ENCODE measurements at regions of chr16 and their contacts with region 1.

Region 1: GRCh38 chr16:48164907-48165726 is 9.3 kb upstream of the ABCC12 start:
- DNase-seq: peak; percentile 61
- H3K4me3 ChIP-seq: peak overlapping the region in 1 of 3 experiments; percentile 16
- H3K27ac ChIP-seq: no peak overlapping the region
- H3K4me1 ChIP-seq: no peaks in the 10 kb centered on the region
- H3K27me3 ChIP-seq: no peaks in the 10 kb centered on the region
- CTCF ChIP-seq: peak; percentile 68 to 83

Region 2: DNA sequence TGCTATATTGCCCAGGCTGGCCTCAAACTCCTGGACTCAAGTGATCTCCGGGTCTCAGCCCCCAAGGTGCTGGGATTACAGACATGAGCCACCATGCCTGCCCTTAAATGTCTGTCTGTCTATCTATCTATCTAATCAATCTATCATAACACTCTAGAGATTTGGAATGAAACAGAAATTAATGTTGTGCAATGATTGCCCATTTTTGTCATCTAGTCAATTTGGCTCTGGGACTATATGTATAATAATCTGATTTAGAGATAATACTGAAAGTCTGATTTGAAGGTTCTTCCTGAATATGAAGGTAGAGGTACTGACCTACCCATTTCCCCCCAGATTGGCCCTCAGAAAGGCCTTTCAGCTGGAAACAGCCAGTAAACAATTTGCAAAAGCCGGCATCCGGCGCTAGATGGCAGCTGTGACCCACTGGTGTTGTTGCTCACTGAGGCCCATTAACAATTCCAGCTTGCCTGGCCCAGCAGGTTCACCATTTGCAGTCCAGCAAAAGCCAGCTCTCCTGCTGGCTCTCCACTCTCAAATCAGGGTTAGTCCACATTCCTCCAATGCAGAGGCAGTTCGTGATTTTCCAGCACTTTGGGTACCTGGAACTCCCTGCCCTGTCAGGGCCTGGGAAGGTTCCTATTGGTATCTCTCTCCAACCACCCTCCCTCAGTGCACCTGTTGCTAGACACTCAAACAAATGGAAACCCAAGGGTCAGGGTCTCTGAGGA is 1311.2 kb before region 1 on chr16:
- CTCF ChIA-PET with region 1: no interaction called
- dilution Hi-C with region 1: no loop called
- in situ Hi-C with region 1: no loop called
- intact Hi-C with region 1: loop called (anchors 1 kb)
- DNase-seq: peak; percentile 49
- H3K4me3 ChIP-seq: no peak overlapping the region
- H3K27ac ChIP-seq: no peak overlapping the region
- H3K4me1 ChIP-seq: no peaks in the 10 kb centered on the region
- H3K27me3 ChIP-seq: no peaks in the 10 kb centered on the region
- CTCF ChIP-seq: peak; percentile 88 to 94

Region 3: DNA sequence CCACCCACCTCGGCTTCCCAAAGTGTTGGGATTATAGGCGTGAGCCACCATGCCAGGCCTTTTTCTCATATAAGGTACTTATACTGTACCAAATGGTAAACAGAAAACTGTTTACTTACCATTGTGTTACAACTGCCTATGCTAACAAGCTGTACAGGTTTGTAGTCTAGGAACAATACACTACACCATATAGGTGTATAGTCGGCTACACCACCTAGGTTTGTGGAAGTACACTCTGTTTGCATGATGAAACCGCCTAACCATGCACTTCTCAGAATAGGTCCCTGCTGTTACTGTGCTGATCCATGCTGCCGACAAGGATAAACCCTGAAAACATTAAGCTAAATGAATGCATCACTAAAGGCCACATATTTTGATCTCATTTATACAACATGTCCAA is 1210.6 kb before region 1 on chr16:
- CTCF ChIA-PET with region 1: no interaction called
- dilution Hi-C with region 1: loop called (anchors 5 kb)
- in situ Hi-C with region 1: loop called (anchors 10 kb)
- intact Hi-C with region 1: no loop called
- DNase-seq: no peak
- H3K4me3 ChIP-seq: no peak overlapping the region
- H3K27ac ChIP-seq: no peak overlapping the region
- H3K4me1 ChIP-seq: no peaks in the 10 kb centered on the region
- H3K27me3 ChIP-seq: no peaks in the 10 kb centered on the region
- CTCF ChIP-seq: no peak

Region 4: DNA sequence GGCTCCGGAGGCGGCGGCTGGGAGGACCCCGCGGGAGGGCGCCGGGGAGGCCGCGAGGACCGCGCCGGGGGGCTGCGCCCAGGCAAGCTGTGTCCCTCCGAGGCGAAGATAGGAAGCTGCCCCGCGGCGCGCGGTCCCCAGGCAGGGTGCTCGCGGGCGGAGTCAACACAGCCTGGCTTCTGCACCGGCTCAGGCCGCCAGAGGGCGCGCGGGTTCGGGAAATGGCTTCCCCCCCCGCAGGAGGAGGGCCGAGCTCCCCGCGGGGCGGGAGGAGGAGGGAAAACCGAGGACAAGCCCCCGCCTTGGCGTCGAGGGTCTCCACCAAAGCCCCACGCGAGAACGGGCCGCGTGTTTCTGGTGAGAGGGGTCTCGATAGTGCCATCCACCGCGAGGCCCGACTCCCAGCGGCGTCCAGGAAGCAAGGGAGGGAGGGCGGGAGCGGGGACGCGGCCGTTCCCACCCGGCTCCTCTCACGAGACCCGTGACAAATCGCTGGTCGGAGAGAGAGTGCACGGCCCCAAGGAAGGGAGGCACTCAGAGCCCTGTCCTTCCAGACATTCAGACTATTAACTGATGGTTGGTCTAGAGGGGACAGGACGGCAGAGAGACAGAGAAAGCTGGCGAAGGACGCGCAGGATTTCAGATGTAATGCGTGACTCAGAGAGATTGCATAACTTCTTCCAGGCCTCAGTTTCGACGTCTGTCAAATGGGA is 1127.2 kb before region 1 on chr16:
- CTCF ChIA-PET with region 1: no interaction called
- dilution Hi-C with region 1: no loop called
- in situ Hi-C with region 1: loop called (anchors 10 kb)
- intact Hi-C with region 1: loop called (anchors 1 kb)
- DNase-seq: peak; percentile 68
- H3K4me3 ChIP-seq: peak overlapping the region; percentile 63 to 80 (median 70)
- H3K27ac ChIP-seq: peak overlapping the region; percentile 26
- H3K4me1 ChIP-seq: peaks cover 4% of the 10 kb centered on the region
- H3K27me3 ChIP-seq: no peaks in the 10 kb centered on the region
- CTCF ChIP-seq: peak; percentile 76 to 94

Region 5: GRCh38 chr16:47150067-47150466 is 1015.0 kb before region 1 on chr16:
- CTCF ChIA-PET with region 1: no interaction called
- dilution Hi-C with region 1: no loop called
- in situ Hi-C with region 1: loop called (anchors 10 kb)
- intact Hi-C with region 1: no loop called
- DNase-seq: no peak
- H3K4me3 ChIP-seq: no peak overlapping the region
- H3K27ac ChIP-seq: no peak overlapping the region
- H3K4me1 ChIP-seq: no peaks in the 10 kb centered on the region
- H3K27me3 ChIP-seq: no peaks in the 10 kb centered on the region
- CTCF ChIP-seq: no peak

Region 6: DNA sequence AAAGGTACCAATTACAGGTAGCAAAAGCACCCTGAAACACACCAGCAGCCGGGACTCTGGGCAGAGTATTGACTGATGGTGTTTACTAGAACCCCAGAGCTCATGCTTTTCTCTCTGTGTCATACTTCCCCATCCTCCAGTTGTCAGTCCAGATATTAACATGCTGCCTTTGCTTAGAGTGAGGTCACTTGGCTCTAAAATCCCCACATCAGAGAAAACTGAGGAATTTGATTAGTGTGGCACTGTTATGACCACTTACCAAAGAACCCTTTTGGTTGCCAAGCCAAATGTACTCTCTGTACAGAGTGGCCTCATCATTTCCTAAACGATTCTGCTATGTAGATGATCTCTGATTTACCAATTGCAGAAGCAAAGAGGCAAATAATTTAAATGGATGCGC is 89.7 kb before region 1 on chr16:
- CTCF ChIA-PET with region 1: no interaction called
- dilution Hi-C with region 1: no loop called
- in situ Hi-C with region 1: no loop called
- intact Hi-C with region 1: no loop called
- DNase-seq: no peak
- H3K4me3 ChIP-seq: no peak overlapping the region
- H3K27ac ChIP-seq: no peak overlapping the region
- H3K4me1 ChIP-seq: no peaks in the 10 kb centered on the region
- H3K27me3 ChIP-seq: no peaks in the 10 kb centered on the region
- CTCF ChIP-seq: no peak

Region 7: DNA sequence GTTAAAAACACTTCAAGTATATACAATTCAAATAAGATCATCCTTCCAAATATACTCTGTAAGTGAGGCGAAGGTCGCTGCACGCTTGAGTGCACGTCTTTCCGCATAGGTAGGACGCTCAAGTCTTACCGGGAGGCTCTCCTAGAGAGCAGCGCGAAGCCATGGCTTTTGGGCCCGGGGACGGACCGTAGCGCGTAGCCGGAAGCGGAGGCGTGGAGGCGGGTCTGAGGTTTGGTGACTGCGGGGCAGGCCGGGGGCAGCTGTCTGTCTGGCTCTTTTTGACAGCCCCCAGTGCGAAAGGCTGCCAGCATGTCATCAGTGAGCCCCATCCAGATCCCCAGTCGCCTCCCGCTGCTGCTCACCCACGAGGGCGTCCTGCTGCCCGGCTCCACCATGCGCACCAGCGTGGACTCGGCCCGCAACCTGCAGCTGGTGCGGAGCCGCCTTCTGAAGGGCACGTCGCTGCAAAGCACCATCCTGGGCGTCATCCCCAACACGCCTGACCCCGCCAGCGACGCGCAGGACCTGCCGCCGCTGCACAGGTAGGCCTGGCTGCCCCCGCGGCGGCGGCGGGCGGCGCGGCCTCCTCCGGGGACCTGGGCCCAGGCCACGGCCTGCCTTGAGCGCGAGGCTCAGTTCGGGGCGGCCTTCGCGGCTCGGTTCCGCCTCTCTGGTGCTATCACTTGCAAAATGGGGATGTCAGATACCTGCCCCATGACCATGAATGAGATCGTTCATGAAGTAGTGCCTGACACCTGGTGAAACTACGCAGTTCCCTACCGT is 79.2 kb after region 1 on chr16 and contains the start of gene LONP2:
- CTCF ChIA-PET with region 1: no interaction called
- dilution Hi-C with region 1: no loop called
- in situ Hi-C with region 1: no loop called
- intact Hi-C with region 1: loop called (anchors 2 kb)
- DNase-seq: peak; percentile 93
- H3K4me3 ChIP-seq: peak within 1 kb of the TSS; percentile 76 to 93 (median 84)
- H3K27ac ChIP-seq: peak within 1 kb of the TSS; percentile 78
- H3K4me1 ChIP-seq: peaks cover 25% of the 10 kb centered on the region
- H3K27me3 ChIP-seq: no peaks in the 10 kb centered on the region
- CTCF ChIP-seq: no peak
- total RNA-seq, gene LONP2: 62.8 to 72.8 TPM

Region 8: DNA sequence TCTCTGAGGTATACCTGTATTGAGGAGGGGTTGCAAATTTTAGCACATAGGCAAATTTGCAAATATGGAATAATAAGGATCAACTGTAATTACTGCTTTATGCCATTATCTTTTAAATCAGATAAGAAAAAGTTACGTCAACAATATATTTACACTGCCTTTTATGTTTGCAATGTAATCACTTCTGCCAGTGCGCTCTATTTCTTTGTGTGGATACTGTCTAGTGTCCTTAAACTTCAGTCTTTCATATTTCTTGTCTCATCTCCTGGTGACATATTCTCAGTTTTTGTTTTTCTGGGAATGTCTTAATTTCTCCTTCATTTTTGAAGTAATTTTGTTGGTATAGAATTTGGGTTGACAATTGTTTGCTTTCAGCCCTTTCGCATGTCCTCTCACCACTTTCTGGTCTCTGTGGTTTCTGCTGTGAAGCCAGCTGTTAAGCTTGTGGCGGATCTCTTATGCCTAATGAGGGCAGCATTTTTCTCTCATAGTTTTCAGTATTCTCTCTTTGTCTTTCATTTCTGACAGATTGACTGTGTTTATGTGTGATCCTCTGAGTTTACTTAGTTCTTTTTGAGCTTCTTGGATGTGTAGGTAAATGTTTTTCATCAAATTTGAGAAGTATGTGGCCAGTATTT is 119.8 kb after region 1 on chr16:
- CTCF ChIA-PET with region 1: no interaction called
- dilution Hi-C with region 1: no loop called
- in situ Hi-C with region 1: no loop called
- intact Hi-C with region 1: no loop called
- DNase-seq: no peak
- H3K4me3 ChIP-seq: no peak overlapping the region
- H3K27ac ChIP-seq: no peak overlapping the region
- H3K4me1 ChIP-seq: no peaks in the 10 kb centered on the region
- H3K27me3 ChIP-seq: no peaks in the 10 kb centered on the region
- CTCF ChIP-seq: no peak

Region 9: DNA sequence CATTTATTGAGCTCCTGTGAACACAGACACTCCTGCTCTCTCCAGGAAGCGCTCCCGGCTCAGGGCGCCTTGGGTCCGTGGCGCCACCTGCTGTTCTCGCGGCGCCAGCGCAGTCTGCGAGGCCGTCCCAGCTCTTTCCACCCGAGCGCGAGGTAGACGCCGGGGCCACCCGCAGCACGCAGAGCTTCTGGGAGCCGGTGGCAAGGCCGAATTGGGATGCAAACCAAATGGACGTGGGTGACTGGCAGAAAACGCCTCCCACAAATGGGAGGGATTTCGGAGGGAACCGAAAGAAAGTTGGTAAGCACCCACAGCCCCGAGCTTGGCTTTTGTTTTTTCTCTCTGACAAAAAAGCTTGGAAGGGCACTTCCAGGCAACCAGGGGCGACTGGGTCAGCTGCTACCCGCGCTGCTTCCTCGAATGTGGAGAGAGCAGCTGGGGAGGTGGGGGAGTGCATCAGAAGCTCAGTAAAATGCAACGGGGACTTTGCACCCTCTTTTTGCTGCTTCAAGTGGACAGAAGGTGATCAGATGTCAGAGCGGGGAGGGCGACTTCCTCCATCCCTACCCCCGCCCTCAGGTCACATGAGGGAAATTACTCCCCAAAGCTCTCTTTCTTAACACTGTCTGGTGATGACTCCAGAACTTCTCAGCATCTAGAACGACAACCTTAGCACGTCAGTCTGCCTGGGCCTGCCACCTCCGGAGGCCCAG is 458.3 kb after region 1 on chr16:
- CTCF ChIA-PET with region 1: interaction called, 18 read pairs
- dilution Hi-C with region 1: no loop called
- in situ Hi-C with region 1: no loop called
- intact Hi-C with region 1: loop called (anchors 10 kb)
- DNase-seq: peak; percentile 87
- H3K4me3 ChIP-seq: peak overlapping the region; percentile 31 to 48 (median 47)
- H3K27ac ChIP-seq: peak overlapping the region; percentile 23
- H3K4me1 ChIP-seq: peaks cover 8% of the 10 kb centered on the region
- H3K27me3 ChIP-seq: no peaks in the 10 kb centered on the region
- CTCF ChIP-seq: peak; percentile 93 to 100